ENCODE measurements at regions of chr14 and their contacts with region 1.

Region 1: GRCh38 chr14:94748667-94749347 is 21.1 kb downstream of the GSC start:
- DNase-seq: peak; percentile 59
- ATAC-seq: peak; percentile 99
- H3K4me3 ChIP-seq: 0 out of 4 replicates have a peak overlapping the region, but pooled peaks of 1 of the 2 experiments have one; percentile 12
- H3K27ac ChIP-seq: no peak overlapping the region
- H3K4me1 ChIP-seq: peaks cover 0 to 9% of the 10 kb centered on the region in 2 experiments; a peak in 3 of 4 replicates
- H3K27me3 ChIP-seq: no peaks in the 10 kb centered on the region
- CTCF ChIP-seq: peak; percentile 84 to 97 (median 91)
- POLR2A ChIP-seq: no peak
- RAD21 ChIP-seq: peak; percentile 85

Region 2: GRCh38 chr14:94322648-94323570 is 425.9 kb before region 1 on chr14 and contains the start of gene SERPINA6:
- CTCF ChIA-PET with region 1: no interaction called
- POLR2A ChIA-PET with region 1: no interaction called
- RAD21 ChIA-PET with region 1: no interaction called
- intact Hi-C with region 1: no loop called
- DNase-seq: no peak
- ATAC-seq: no peak
- H3K4me3 ChIP-seq: no peak within 1 kb of the TSS
- H3K27ac ChIP-seq: no peak within 1 kb of the TSS
- H3K4me1 ChIP-seq: no peaks in the 10 kb centered on the region
- H3K27me3 ChIP-seq: no peaks in the 10 kb centered on the region
- CTCF ChIP-seq: no peak
- POLR2A ChIP-seq: no peak
- RAD21 ChIP-seq: no peak
- total RNA-seq, gene SERPINA6: not detected

Region 3: DNA sequence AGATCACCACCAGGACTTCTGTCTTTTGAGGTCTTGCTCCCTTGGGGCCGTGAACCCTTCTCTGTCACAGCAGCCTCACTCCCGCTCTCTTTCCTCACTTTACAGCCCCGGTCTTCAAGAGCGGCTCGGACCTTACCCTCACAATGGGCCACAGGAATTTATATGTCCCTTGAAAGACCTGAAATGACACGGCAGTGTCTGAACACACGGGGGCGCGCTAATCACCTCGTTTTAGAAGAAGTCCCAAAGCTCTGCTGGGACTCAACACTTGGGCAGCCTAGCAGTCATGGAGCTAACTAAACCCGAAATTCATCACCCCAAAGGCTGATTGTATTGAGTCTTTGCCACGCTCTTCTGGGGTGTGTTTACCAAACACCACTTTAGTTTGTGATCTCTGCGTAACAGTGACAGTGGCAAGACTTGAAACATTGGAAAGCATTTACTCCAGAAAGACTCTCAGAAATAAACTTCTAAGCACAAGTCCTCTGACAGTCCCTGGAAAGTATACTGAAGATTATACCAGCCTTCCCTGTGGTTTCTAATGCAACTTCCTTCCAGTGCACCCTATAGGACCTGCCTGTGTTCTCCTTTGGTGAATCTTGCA is 325.3 kb before region 1 on chr14:
- CTCF ChIA-PET with region 1: no interaction called
- POLR2A ChIA-PET with region 1: no interaction called
- RAD21 ChIA-PET with region 1: no interaction called
- intact Hi-C with region 1: loop called (anchors 10 kb)
- DNase-seq: peak; percentile 75
- ATAC-seq: peak; percentile 99
- H3K4me3 ChIP-seq: no peak overlapping the region
- H3K27ac ChIP-seq: no peak overlapping the region
- H3K4me1 ChIP-seq: peaks cover 0 to 6% of the 10 kb centered on the region in 2 experiments; a peak in 1 of 4 replicates
- H3K27me3 ChIP-seq: peaks cover 10% of the 10 kb centered on the region
- CTCF ChIP-seq: peak; percentile 80 to 83 (median 82)
- POLR2A ChIP-seq: no peak
- RAD21 ChIP-seq: peak; percentile 74

Region 4: GRCh38 chr14:94559638-94560290 is 189.0 kb before region 1 on chr14:
- CTCF ChIA-PET with region 1: no interaction called
- POLR2A ChIA-PET with region 1: no interaction called
- RAD21 ChIA-PET with region 1: no interaction called
- intact Hi-C with region 1: no loop called
- DNase-seq: no peak
- ATAC-seq: no peak
- H3K4me3 ChIP-seq: no peak overlapping the region
- H3K27ac ChIP-seq: no peak overlapping the region
- H3K4me1 ChIP-seq: no peaks in the 10 kb centered on the region
- H3K27me3 ChIP-seq: no peaks in the 10 kb centered on the region
- CTCF ChIP-seq: no peak
- POLR2A ChIP-seq: no peak
- RAD21 ChIP-seq: no peak

Region 5: DNA sequence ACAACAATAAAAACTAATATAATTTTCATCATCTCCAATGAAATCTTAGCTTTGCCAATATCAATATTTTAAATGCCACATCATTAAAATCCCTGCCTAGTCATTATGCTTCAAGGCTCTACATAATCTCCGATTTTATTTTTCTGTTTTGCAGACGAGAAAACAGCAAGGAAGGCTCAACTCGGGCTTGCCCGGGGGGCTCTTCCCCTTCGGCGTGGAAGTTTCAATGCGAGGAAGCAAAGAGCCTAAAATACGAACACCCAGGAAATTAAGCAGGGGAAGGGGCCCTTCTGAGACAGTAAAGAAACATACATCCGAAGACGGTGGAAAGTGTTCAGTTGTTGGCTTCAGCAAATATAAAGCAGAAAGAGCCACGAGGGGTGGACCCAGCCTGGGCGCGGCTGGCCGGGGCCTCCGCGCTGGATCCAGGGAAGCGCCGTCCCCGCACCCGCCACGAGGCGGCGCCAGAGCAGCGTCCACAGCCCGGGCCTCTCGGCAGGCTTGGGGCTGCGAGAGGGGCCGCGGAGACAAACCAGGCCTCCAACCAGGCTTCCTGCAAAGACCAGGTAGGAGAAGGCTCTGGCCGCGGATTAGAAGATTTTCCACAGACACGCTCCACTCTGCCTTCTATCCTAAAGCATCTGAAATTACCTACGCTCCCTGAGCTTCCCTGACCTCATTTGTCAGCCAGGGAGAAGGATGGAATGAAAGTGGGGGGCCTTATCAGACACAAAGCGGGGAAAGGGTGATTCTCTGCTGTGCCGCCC is 59.4 kb before region 1 on chr14:
- CTCF ChIA-PET with region 1: interaction called, 10 read pairs
- POLR2A ChIA-PET with region 1: no interaction called
- RAD21 ChIA-PET with region 1: interaction called in 1 of 2 experiments, 3 read pairs
- intact Hi-C with region 1: loop called (anchors 1 kb)
- DNase-seq: no peak
- ATAC-seq: peak; percentile 99
- H3K4me3 ChIP-seq: peak overlapping the region; percentile 24 to 29; a peak in 3 of 4 replicates
- H3K27ac ChIP-seq: no peak overlapping the region
- H3K4me1 ChIP-seq: peaks cover 0 to 8% of the 10 kb centered on the region in 2 experiments; a peak in 1 of 4 replicates
- H3K27me3 ChIP-seq: no peaks in the 10 kb centered on the region
- CTCF ChIP-seq: peak; percentile 90 to 97 (median 96)
- POLR2A ChIP-seq: no peak
- RAD21 ChIP-seq: peak; percentile 98

Region 6: GRCh38 chr14:94717808-94718207 is 31.0 kb before region 1 on chr14:
- CTCF ChIA-PET with region 1: interaction called, 3 read pairs
- POLR2A ChIA-PET with region 1: no interaction called
- RAD21 ChIA-PET with region 1: no interaction called
- intact Hi-C with region 1: loop called (anchors 2 kb)
- DNase-seq: no peak
- ATAC-seq: peak; percentile 55; the same call in 1 of the 2 replicates
- H3K4me3 ChIP-seq: no peak overlapping the region
- H3K27ac ChIP-seq: no peak overlapping the region
- H3K4me1 ChIP-seq: no peaks in the 10 kb centered on the region
- H3K27me3 ChIP-seq: no peaks in the 10 kb centered on the region
- CTCF ChIP-seq: peak; percentile 6 to 32 (median 19); a peak in 2 of 6 replicates
- POLR2A ChIP-seq: no peak
- RAD21 ChIP-seq: peak; percentile 62

Region 7: DNA sequence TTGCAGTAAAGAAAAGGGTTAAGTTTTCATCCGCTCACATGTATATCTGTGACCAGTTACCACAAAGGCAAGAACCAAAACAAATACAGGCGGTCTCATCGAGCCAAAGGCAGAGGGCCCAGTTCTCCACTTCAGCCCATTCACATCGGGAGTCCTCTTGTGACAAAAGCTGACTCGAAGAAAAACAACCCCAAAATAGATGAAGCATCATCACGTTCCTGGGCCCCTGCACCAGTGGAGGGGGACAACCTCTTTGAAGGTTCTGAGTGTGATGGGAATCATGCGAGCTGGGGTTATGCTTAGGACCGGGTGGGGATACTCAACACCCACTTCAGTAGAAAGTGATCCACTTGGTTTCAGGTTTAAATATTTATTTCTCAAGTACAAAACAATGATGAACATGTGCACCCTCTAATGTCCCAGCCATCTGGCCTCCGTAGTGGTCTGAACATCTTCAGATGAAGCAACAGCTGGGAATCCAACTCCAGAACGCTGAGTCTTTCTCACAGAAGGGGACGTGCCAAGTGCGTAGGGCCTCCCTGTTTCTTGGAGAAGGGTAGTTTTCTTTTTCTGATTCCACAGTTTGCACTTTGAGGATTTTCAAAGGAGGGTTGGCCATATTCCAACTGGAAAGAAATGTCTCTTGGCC is 12.7 kb after region 1 on chr14:
- CTCF ChIA-PET with region 1: no interaction called
- POLR2A ChIA-PET with region 1: no interaction called
- RAD21 ChIA-PET with region 1: no interaction called
- intact Hi-C with region 1: no loop called
- DNase-seq: no peak
- ATAC-seq: no peak
- H3K4me3 ChIP-seq: no peak overlapping the region
- H3K27ac ChIP-seq: no peak overlapping the region
- H3K4me1 ChIP-seq: peaks cover 0 to 4% of the 10 kb centered on the region in 2 experiments; a peak in 1 of 4 replicates
- H3K27me3 ChIP-seq: no peaks in the 10 kb centered on the region
- CTCF ChIP-seq: no peak
- POLR2A ChIP-seq: no peak
- RAD21 ChIP-seq: no peak

Region 8: DNA sequence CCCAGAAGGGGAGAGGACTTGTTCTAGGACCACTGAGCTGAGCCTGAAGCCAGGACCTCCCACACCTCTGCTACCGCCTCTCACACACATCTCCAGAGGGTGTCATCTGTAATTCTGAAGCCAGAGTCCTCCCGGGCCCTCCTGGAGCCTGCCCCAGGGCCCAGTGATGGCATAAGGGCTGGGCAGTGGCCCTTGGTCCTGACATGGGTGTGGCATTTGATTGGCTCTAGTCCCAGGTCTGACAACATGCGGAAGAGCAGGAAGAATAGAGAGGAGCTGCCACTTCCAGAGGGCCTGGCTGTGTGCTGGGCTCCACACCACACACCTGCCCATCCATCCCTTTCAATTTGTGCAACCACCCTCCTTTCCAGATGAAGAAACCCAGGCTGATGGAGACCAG is 165.4 kb after region 1 on chr14:
- CTCF ChIA-PET with region 1: no interaction called
- POLR2A ChIA-PET with region 1: no interaction called
- RAD21 ChIA-PET with region 1: no interaction called
- intact Hi-C with region 1: no loop called
- DNase-seq: no peak
- ATAC-seq: no peak
- H3K4me3 ChIP-seq: no peak overlapping the region
- H3K27ac ChIP-seq: no peak overlapping the region
- H3K4me1 ChIP-seq: peaks cover 2 to 10% of the 10 kb centered on the region in 2 experiments; a peak in 2 of 4 replicates
- H3K27me3 ChIP-seq: peaks cover 14% of the 10 kb centered on the region; the same call in 1 of the 2 replicates
- CTCF ChIP-seq: no peak
- POLR2A ChIP-seq: no peak
- RAD21 ChIP-seq: no peak

Measured in HCT116 (cell line).